ENCODE measurements at regions of chr6 and their contacts with region 1.

Region 1: GRCh38 chr6:158213925-158214674 is 46.0 kb downstream of the GTF2H5 start:
- DNase-seq: peak; percentile 72
- H3K4me3 Mint-ChIP-seq: no peak overlapping the region
- H3K27ac Mint-ChIP-seq: no peak overlapping the region
- H3K4me1 Mint-ChIP-seq: peaks cover 8% of the 10 kb centered on the region
- H3K27me3 Mint-ChIP-seq: no peaks in the 10 kb centered on the region
- CTCF ChIP-seq: peak; percentile 76

Region 2: GRCh38 chr6:158518191-158519127 is 304.4 kb after region 1 on chr6:
- CTCF ChIA-PET with region 1: interaction called, 13 read pairs
- intact Hi-C with region 1: no loop called
- DNase-seq: peak; percentile 63
- H3K4me3 Mint-ChIP-seq: peak overlapping the region; percentile 69
- H3K27ac Mint-ChIP-seq: peak overlapping the region; percentile 56
- H3K4me1 Mint-ChIP-seq: peaks cover 9% of the 10 kb centered on the region
- H3K27me3 Mint-ChIP-seq: no peaks in the 10 kb centered on the region
- CTCF ChIP-seq: peak; percentile 45

Region 3: GRCh38 chr6:158605266-158605878 is 391.3 kb after region 1 on chr6:
- CTCF ChIA-PET with region 1: interaction called, 26 read pairs
- intact Hi-C with region 1: loop called (anchors 2 kb)
- DNase-seq: peak; percentile 65
- H3K4me3 Mint-ChIP-seq: no peak overlapping the region
- H3K27ac Mint-ChIP-seq: no peak overlapping the region
- H3K4me1 Mint-ChIP-seq: peaks cover 11% of the 10 kb centered on the region
- H3K27me3 Mint-ChIP-seq: no peaks in the 10 kb centered on the region
- CTCF ChIP-seq: peak; percentile 36

Region 4: DNA sequence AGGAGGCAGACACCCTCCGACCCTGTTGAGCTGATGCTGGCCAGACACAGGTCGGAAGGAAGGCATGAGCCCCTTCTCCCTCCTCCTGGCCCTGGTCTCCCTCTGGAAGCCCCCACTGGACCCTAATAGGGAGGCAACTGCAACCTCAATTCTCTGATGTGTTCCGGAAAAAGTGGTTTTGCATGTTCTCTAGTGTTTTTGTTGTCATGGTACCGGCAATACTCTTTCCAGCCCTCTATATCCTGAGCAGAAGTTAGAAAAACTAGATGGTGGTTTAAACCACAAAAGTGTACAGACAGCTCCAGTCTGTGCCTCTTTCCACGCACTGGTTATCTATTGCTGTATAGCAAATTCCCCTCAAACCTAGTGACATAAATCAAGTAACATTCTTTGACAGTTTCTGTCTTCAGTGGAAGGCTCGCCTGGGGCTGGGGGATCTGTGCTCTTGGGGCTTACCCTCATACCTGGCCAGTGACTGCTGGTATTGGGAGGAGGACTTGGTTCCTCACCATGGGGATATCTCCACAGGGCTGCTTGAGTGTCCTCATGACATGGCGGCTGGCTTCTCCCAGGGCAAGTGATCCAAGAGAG is 472.8 kb after region 1 on chr6:
- CTCF ChIA-PET with region 1: interaction called, 20 read pairs
- intact Hi-C with region 1: loop called (anchors 2 kb)
- DNase-seq: no peak
- H3K4me3 Mint-ChIP-seq: no peak overlapping the region
- H3K27ac Mint-ChIP-seq: no peak overlapping the region
- H3K4me1 Mint-ChIP-seq: peaks cover 10% of the 10 kb centered on the region
- H3K27me3 Mint-ChIP-seq: no peaks in the 10 kb centered on the region
- CTCF ChIP-seq: no peak